OCI-LY7 (cell line): ENCODE measurements at regions of chr13 and their contacts with region 1.

Region 1: GRCh38 chr13:21603531-21604448 is at the start of gene MICU2:
- DNase-seq: peak; percentile 97
- H3K4me3 ChIP-seq: peak within 1 kb of the TSS; percentile 72
- H3K27ac ChIP-seq: peak within 1 kb of the TSS; percentile 73
- H3K4me1 ChIP-seq: peaks cover 13% of the 10 kb centered on the region
- CTCF ChIP-seq: no peak
- total RNA-seq, gene MICU2: 41.6 and 51.3 TPM in 2 replicates

Region 2: DNA sequence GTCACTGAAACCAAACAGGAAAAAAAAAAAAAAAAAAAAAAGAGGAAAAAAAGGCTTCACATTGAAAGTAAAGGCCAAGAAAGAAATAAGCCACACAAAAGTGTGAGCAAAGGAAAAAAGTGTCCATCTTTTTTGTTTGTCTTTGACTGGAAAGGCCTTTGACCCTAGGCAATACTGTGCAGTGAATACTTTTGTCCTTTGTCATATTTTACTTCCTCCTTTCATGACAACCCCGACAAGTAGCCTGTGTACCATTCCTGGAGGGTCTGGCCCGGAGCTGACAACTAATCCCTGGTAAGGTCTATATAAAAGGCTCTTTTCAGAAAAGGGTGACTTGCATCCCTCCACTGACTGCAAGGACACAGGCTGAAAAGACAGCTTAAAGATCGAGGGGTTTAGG is 13.1 kb after region 1 on chr13:
- CTCF ChIA-PET with region 1: interaction called, 3 read pairs
- POLR2A ChIA-PET with region 1: interaction called, 15 read pairs
- intact Hi-C with region 1: no loop called
- DNase-seq: no peak
- H3K4me3 ChIP-seq: no peak overlapping the region
- H3K27ac ChIP-seq: no peak overlapping the region
- H3K4me1 ChIP-seq: no peaks in the 10 kb centered on the region
- CTCF ChIP-seq: no peak

Region 3: GRCh38 chr13:21777813-21778212 is 174.0 kb after region 1 on chr13:
- CTCF ChIA-PET with region 1: no interaction called
- POLR2A ChIA-PET with region 1: no interaction called
- intact Hi-C with region 1: no loop called
- DNase-seq: no peak
- H3K4me3 ChIP-seq: no peak overlapping the region
- H3K27ac ChIP-seq: no peak overlapping the region
- H3K4me1 ChIP-seq: no peaks in the 10 kb centered on the region
- CTCF ChIP-seq: no peak